Dendritic cell treated with granulocyte-macrophage colony-stimulating factor and Interleukin-4, amounts not matched to agents 40 ng/mL and 50 ng/mL, for 4 days (primary cell): ENCODE measurements at regions of chr16 and their contacts with region 1.

Region 1: GRCh38 chr16:74601126-74601871 is 5.6 kb downstream of the GLG1 start:
- H3K4me3 Mint-ChIP-seq: peak overlapping the region; percentile 52
- H3K27ac Mint-ChIP-seq: peak overlapping the region; percentile 39
- H3K4me1 Mint-ChIP-seq: peaks cover 53% of the 10 kb centered on the region
- H3K27me3 Mint-ChIP-seq: no peaks in the 10 kb centered on the region

Region 2: DNA sequence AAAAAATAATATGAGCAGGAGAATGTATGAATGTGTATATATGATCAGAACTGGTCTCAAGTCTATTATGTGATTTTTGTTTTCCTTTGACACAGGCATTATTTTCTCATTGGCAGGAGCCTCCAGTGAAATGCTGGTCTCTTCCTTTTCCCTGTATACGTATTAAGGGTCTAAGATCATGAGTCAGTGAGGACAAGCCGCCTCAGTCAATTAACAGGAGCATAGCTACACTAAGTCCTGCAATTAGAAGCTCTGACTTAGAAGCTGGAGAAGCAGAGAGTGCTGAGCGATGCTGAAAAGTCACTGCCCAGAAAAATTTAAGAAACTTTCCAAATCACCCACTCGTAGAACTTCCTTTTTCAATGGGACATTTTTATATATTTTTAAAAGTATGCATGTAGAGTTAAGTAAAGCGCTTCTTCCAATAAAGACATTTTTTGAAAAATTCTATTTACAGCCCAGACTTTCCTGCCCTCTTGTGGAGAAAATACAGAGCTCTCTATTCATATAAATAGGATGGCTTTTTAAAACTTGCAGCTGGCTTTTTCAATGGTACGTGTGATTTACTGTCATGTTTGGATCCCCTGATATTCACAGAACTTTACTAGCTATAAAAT is 374.9 kb before region 1 on chr16:
- intact Hi-C with region 1: no loop called
- H3K4me3 Mint-ChIP-seq: no peak overlapping the region
- H3K27ac Mint-ChIP-seq: no peak overlapping the region
- H3K4me1 Mint-ChIP-seq: no peaks in the 10 kb centered on the region
- H3K27me3 Mint-ChIP-seq: no peaks in the 10 kb centered on the region

Region 3: DNA sequence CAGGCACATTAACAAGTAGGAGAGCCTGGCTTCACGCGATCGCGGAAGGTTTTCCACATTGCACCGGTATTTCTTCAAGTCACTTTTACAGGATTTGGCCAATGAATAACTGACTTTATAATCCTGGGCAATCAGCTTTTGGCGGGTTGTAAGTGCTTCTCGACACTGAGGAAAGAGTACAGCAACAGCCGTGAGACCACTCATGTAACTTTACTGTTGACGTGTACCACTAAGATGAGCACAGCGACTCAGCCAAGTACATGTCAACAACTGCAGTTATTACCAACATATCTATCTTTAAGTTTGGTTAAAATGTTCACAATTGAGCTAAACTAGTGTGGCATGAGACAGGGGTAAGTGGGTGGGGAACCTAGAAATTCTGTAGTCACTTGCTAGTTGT is 108.3 kb before region 1 on chr16:
- intact Hi-C with region 1: no loop called
- H3K4me3 Mint-ChIP-seq: no peak overlapping the region
- H3K27ac Mint-ChIP-seq: no peak overlapping the region
- H3K4me1 Mint-ChIP-seq: no peaks in the 10 kb centered on the region
- H3K27me3 Mint-ChIP-seq: no peaks in the 10 kb centered on the region

Region 4: GRCh38 chr16:74563828-74564263 is 37.5 kb before region 1 on chr16:
- intact Hi-C with region 1: loop called (anchors 5 kb)
- H3K4me3 Mint-ChIP-seq: no peak overlapping the region
- H3K27ac Mint-ChIP-seq: peak overlapping the region; percentile 65
- H3K4me1 Mint-ChIP-seq: peaks cover 42% of the 10 kb centered on the region
- H3K27me3 Mint-ChIP-seq: no peaks in the 10 kb centered on the region